GM13977 (cell line): ENCODE measurements at regions of chr10 and their contacts with region 1.

Region 1: GRCh38 chr10:110137142-110137545 is 70.3 kb upstream of the MXI1 start:
- DNase-seq: peak; percentile 57
- CTCF ChIP-seq: peak; percentile 71

Region 2: GRCh38 chr10:109883859-109884771 is 253.0 kb before region 1 on chr10:
- in situ Hi-C with region 1: loop called (anchors 10 kb)
- DNase-seq: peak; percentile 75
- CTCF ChIP-seq: peak; percentile 96

Region 3: GRCh38 chr10:110016039-110016438 is 121.1 kb before region 1 on chr10:
- in situ Hi-C with region 1: no loop called
- DNase-seq: no peak
- CTCF ChIP-seq: peak; percentile 28

Region 4: DNA sequence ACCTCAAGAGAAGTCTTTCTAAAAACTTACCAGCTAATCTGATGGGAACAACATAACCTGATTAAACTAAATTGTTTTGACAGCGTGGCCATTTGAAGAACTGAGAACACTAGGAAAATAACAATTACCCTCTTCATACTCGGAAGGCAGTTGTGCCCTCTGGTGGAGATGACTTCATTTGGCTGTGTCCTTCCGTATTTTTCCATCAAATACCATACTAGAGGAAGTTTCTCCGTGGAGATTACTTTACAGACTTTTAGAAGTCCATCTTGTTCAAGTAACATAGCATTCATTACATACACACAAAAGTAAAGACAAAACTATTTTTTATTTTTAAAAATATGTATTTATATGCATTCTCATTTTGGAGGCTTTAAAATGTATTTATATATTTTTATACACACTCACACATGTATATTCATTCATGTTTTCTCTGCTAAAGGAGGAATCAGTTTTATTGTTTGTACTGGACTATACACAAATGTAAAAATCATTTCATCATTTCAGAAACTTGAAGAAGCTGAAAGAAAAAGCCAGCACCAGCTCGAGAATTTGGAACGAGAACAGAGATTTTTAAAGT is 142.4 kb after region 1 on chr10:
- in situ Hi-C with region 1: loop called (anchors 5 kb)
- DNase-seq: peak; percentile 37
- CTCF ChIP-seq: peak; percentile 61

Region 5: DNA sequence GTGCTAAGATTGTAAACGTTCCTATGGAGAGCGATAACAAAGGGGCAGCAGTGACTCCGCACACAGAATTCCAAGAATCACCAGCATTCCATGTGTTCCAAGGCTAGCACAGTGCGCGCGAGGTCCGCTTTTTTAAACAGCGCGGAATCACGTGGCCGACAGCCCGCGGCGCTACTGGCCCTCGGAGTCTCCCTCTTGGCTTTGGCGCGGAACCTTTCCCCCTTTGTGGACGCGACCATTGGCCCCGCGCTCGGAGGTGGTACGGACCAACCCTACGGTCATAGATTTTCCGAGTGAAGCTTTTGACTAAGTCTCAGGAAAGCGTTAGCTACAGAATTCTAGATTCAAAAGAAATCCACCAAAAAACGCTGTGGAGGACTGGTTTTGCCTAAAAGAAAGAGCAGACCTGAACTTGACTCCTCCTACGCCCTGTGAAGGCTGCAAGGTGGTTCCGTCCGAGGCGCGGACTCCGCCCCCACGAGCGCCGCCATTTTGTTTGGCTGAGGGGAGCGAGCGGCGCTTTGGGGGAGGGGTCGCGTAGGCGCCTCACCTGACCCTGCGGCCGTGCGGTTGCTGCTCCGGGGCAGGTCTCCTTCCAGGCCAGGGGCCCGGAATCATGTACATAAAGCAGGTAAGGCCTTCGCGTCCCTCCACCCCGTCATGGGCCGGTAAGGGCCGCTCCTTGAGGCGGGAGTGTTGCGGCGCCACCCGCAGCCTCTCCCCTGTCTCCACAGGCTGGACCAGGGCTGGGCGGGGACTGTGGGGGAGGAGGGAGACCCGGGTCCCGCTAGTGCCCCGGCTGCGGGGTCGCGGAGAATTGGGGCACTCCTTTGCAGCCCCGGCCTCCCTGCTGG is 430.3 kb after region 1 on chr10 and contains the start of gene SMC3:
- in situ Hi-C with region 1: loop called (anchors 25 kb)
- DNase-seq: peak; percentile 82
- CTCF ChIP-seq: no peak